Mammary epithelial cell (primary cell): ENCODE measurements at regions of chr7 and their contacts with region 1.

Region 1: DNA sequence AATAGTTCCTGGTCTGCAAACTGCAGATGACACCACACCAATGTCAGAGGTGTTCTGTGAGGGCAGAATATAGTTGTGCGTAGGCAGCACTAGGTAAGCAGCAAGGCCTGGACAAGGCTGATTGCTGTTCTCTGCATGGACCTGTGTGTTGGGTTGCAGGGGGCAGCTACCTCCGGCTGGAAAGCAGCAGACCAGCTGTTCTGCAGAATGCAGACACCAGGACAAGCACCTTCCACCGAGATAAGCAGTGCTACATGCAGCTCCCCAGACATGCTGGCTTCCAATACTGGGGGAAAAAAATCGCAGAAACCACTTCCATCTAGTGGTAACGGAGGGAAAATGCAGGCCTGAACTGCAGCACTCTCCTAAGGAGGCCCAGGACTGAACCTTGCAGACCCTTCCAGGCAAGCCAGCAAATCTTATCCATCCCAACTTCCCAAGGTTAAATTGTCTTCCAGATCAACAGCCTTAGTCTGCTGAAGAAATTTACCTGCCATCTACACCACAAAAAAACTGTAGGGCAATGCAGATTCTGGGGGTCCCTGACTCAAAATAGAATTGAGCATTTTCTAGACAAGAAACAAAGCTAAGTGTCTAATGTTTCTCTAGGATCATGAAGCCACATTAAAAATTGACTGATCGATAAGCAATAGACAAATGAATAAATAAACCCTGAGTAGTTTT is 50.5 kb upstream of the COBL start:
- DNase-seq: peak; percentile 34
- H3K4me3 ChIP-seq: no peak overlapping the region
- H3K27ac ChIP-seq: no peak overlapping the region
- H3K4me1 ChIP-seq: no peaks in the 10 kb centered on the region
- H3K27me3 ChIP-seq: no peaks in the 10 kb centered on the region
- CTCF ChIP-seq: peak; percentile 66 to 80

Region 2: GRCh38 chr7:50142425-50143017 is 1224.6 kb before region 1 on chr7:
- CTCF ChIA-PET with region 1: no interaction called
- dilution Hi-C with region 1: no loop called
- in situ Hi-C with region 1: no loop called
- intact Hi-C with region 1: loop called (anchors 5 kb)
- DNase-seq: no peak
- H3K4me3 ChIP-seq: no peak overlapping the region
- H3K27ac ChIP-seq: no peak overlapping the region
- H3K4me1 ChIP-seq: no peaks in the 10 kb centered on the region
- H3K27me3 ChIP-seq: no peaks in the 10 kb centered on the region
- CTCF ChIP-seq: peak; percentile 61 to 67

Region 3: GRCh38 chr7:51224811-51225612 is 142.1 kb before region 1 on chr7:
- CTCF ChIA-PET with region 1: no interaction called
- dilution Hi-C with region 1: no loop called
- in situ Hi-C with region 1: no loop called
- intact Hi-C with region 1: loop called (anchors 5 kb)
- DNase-seq: peak; percentile 48
- H3K4me3 ChIP-seq: no peak overlapping the region
- H3K27ac ChIP-seq: no peak overlapping the region
- H3K4me1 ChIP-seq: no peaks in the 10 kb centered on the region
- H3K27me3 ChIP-seq: peaks cover 7% of the 10 kb centered on the region
- CTCF ChIP-seq: peak; percentile 37 to 70

Region 4: DNA sequence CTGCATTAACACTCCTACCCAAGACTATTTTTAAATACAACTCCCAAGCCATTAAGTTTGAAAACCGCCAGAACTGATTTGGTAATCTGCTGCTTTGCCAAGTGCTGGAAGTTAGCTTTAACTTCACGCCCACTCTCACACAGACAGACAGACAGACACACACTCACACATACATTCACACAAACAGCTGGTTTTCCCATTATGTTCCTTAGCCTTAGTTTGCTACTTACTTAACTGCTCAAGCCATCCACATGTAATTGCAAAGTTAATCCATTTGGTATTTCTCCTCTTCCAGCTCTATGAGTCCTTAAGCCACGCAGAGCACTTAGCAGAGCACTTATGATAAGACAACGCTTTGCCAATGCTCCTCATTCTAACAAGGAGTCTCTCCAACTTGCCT is 58.8 kb before region 1 on chr7:
- CTCF ChIA-PET with region 1: no interaction called
- dilution Hi-C with region 1: no loop called
- in situ Hi-C with region 1: no loop called
- intact Hi-C with region 1: no loop called
- DNase-seq: no peak
- H3K4me3 ChIP-seq: no peak overlapping the region
- H3K27ac ChIP-seq: no peak overlapping the region
- H3K4me1 ChIP-seq: no peaks in the 10 kb centered on the region
- H3K27me3 ChIP-seq: peaks cover 2% of the 10 kb centered on the region
- CTCF ChIP-seq: no peak